OCI-LY7 (cell line): ENCODE measurements at regions of chr6 and their contacts with region 1.

Region 1: GRCh38 chr6:108914235-108915022 is 66.2 kb downstream of the ARMC2 start:
- DNase-seq: peak; percentile 64
- H3K4me3 ChIP-seq: no peak overlapping the region
- H3K27ac ChIP-seq: no peak overlapping the region
- H3K4me1 ChIP-seq: peaks cover 4% of the 10 kb centered on the region
- CTCF ChIP-seq: peak; percentile 98

Region 2: DNA sequence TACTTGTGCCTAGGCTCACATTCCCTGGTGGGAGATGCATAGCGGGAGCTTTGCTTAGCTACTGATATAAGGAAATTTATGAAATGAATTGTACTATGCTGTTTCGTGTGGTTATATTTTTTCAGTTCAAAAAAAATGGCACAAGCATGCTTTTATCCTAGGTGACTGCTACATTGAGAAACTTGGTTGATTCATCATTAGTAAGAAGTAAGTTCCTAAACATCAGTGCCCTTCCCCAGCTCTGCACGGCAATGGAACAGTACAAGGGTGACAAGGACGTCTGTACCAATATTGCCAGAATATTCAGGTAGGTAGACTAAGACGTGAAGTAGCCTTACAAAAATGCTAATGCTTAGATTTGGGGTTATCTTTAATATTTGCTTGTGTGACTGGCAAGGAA is 13.5 kb after region 1 on chr6:
- CTCF ChIA-PET with region 1: interaction called, 4 read pairs
- POLR2A ChIA-PET with region 1: interaction called, 10 read pairs
- intact Hi-C with region 1: no loop called
- DNase-seq: no peak
- H3K4me3 ChIP-seq: no peak overlapping the region
- H3K27ac ChIP-seq: no peak overlapping the region
- H3K4me1 ChIP-seq: peaks cover 4% of the 10 kb centered on the region
- CTCF ChIP-seq: no peak

Region 3: GRCh38 chr6:109002051-109002697 is 87.7 kb after region 1 on chr6:
- CTCF ChIA-PET with region 1: no interaction called
- POLR2A ChIA-PET with region 1: no interaction called
- intact Hi-C with region 1: no loop called
- DNase-seq: no peak
- H3K4me3 ChIP-seq: no peak overlapping the region
- H3K27ac ChIP-seq: no peak overlapping the region
- H3K4me1 ChIP-seq: no peaks in the 10 kb centered on the region
- CTCF ChIP-seq: no peak

Region 4: DNA sequence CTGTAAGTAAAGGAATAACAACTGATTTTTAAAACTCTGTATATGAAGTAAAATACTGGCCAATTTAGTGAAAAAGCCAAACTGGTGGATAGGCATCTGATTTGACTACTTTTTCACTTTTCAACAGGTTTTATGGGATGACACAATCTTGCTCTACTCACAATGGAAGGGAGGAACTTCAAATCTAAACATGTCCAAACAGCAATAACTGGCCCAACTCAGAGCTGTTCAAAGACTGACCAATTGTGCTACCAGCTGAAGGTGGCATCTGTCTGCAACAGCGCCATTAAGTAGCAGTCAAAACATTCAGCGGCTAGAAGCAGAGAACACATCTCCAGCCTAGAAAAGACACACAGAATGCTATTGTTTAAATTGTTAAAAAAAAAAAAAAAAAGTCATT is 135.6 kb after region 1 on chr6:
- CTCF ChIA-PET with region 1: no interaction called
- POLR2A ChIA-PET with region 1: no interaction called
- intact Hi-C with region 1: loop called (anchors 5 kb)
- DNase-seq: no peak
- H3K4me3 ChIP-seq: no peak overlapping the region
- H3K27ac ChIP-seq: no peak overlapping the region
- H3K4me1 ChIP-seq: peaks cover 22% of the 10 kb centered on the region
- CTCF ChIP-seq: no peak